HepG2 (cell line): ENCODE measurements at regions of chr4 and their contacts with region 1.

Region 1: DNA sequence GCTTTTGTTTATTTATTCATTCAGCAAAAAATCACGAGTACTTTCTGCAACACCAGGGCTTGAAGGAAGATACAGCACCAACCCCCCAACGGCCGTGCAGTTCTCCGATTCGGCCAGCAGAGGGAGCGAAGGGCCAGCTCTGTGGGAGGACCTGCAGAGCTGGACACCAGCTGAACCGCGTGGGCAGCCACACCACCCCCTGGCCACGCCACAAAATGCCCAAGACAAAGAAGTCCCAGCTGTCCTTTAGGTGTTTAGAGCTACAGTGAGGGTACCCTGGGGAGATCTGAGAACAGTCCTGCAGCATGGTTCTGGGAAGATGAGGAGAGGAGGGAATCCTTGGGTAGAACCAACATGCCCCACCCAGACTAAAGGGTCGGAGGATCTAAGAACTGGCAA is 83.1 kb downstream of the RELL1 start:
- DNase-seq: peak; percentile 55
- ATAC-seq: peak; percentile 90
- H3K4me3 ChIP-seq: no peak overlapping the region
- H3K27ac ChIP-seq: no peak overlapping the region
- H3K4me1 ChIP-seq: peaks cover 47% of the 10 kb centered on the region
- H3K27me3 ChIP-seq: no peaks in the 10 kb centered on the region
- CTCF ChIP-seq: peak; percentile 97
- EP300 ChIP-seq: no peak
- POLR2A ChIP-seq: no peak
- RAD21 ChIP-seq: peak; percentile 95

Region 2: DNA sequence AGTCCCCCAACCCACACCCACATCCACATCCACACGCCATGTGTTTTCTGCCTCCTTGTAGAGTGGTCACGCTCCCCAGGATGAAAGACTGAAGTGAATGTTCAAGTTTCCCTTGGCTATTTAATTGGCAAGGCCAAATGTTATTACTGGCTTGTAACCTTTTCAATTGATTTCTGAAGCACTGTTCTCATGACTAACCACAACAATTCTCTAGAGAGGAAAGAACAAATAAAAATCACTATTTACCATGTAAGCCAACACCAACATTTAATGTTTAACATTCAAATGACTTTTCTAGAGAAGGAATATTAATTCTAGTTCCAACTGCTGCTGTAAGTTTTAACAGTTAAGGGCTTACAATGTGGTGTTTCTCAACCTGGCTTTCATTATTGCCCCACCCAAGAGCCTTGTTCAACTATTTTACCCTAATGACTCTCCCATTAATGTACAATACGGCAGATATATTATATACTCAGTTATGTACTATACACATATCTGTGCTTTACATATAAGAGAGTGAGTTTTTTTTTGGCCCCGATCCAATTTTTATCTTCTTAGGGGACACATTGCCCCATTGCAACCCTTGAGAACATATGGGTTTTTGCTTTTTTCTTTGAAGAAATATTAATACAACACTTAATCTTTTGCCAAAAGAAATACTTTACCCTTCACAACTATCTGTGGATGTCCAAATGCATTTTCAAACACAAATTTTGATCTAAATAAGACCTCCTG is 36.6 kb after region 1 on chr4:
- CTCF ChIA-PET with region 1: no interaction called
- POLR2A ChIA-PET with region 1: no interaction called
- in situ Hi-C with region 1: no loop called
- intact Hi-C with region 1: loop called (anchors 5 kb)
- DNase-seq: no peak
- ATAC-seq: no peak
- H3K4me3 ChIP-seq: no peak overlapping the region
- H3K27ac ChIP-seq: no peak overlapping the region
- H3K4me1 ChIP-seq: peaks cover 19% of the 10 kb centered on the region
- H3K27me3 ChIP-seq: no peaks in the 10 kb centered on the region
- CTCF ChIP-seq: no peak
- EP300 ChIP-seq: no peak
- POLR2A ChIP-seq: no peak
- RAD21 ChIP-seq: no peak

Region 3: DNA sequence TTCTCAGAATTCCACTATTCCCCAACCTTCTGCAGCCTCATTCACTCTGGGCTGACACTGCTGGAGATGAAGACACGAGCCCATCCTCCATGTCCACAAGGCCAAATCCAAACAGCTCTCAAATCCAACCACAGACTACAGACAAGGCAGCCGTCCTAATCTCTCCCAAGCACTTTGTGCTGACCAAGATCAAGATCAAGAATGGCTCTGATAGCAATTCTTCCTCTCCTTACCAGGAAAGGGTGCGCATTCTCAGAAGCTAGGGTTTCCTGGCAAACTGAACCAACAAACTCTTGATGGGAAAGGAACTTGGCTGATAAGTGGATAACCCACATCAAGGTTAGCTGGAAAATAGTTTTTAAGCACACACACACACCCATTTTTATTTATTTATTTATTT is 56.6 kb after region 1 on chr4:
- CTCF ChIA-PET with region 1: no interaction called
- POLR2A ChIA-PET with region 1: no interaction called
- in situ Hi-C with region 1: no loop called
- intact Hi-C with region 1: no loop called
- DNase-seq: no peak
- ATAC-seq: no peak
- H3K4me3 ChIP-seq: no peak overlapping the region
- H3K27ac ChIP-seq: no peak overlapping the region
- H3K4me1 ChIP-seq: peaks cover 71% of the 10 kb centered on the region
- H3K27me3 ChIP-seq: no peaks in the 10 kb centered on the region
- CTCF ChIP-seq: no peak
- EP300 ChIP-seq: no peak
- POLR2A ChIP-seq: no peak
- RAD21 ChIP-seq: no peak

Region 4: GRCh38 chr4:37793562-37793961 is 190.5 kb after region 1 on chr4:
- CTCF ChIA-PET with region 1: interaction called, 12 read pairs
- POLR2A ChIA-PET with region 1: no interaction called
- in situ Hi-C with region 1: loop called (anchors 5 kb)
- intact Hi-C with region 1: loop called (anchors 1 kb)
- DNase-seq: peak; percentile 27
- ATAC-seq: peak; percentile 90
- H3K4me3 ChIP-seq: no peak overlapping the region
- H3K27ac ChIP-seq: no peak overlapping the region
- H3K4me1 ChIP-seq: peaks cover 10% of the 10 kb centered on the region; the same call in 1 of the 2 replicates
- H3K27me3 ChIP-seq: no peaks in the 10 kb centered on the region
- CTCF ChIP-seq: peak; percentile 71
- EP300 ChIP-seq: no peak
- POLR2A ChIP-seq: no peak
- RAD21 ChIP-seq: peak; percentile 60